A673 (cell line): ENCODE measurements at regions of chr4 and their contacts with region 1.

Region 1: GRCh38 chr4:142353149-142353738 is 492.9 kb downstream of the INPP4B start:
- DNase-seq: peak; percentile 70
- H3K4me3 ChIP-seq: no peak overlapping the region
- H3K27ac ChIP-seq: no peak overlapping the region
- H3K4me1 ChIP-seq: peaks cover 27% of the 10 kb centered on the region
- H3K27me3 ChIP-seq: no peaks in the 10 kb centered on the region
- CTCF ChIP-seq: peak; percentile 91

Region 2: DNA sequence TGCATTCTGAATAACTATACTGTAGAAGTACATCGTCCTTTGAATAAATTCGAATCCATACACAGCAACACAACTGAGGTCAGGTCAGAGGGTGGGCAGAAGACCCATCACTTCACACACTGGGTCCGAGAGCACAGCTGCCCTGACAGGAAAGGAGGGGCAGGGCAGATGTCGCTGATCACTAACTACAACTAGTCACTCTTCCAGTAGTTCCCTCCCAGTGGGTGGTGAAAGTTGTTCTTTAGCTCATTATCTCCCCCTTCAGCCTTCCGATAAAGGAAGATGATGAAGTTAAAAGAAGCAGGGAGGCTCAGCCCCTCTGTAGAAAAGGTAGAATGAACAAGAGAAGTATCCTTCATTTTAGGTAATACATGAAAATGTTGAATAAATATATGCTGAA is 214.0 kb after region 1 on chr4:
- CTCF ChIA-PET with region 1: no interaction called
- POLR2A ChIA-PET with region 1: no interaction called
- intact Hi-C with region 1: loop called (anchors 5 kb)
- DNase-seq: peak; percentile 68
- H3K4me3 ChIP-seq: no peak overlapping the region
- H3K27ac ChIP-seq: no peak overlapping the region
- H3K4me1 ChIP-seq: peaks cover 12% of the 10 kb centered on the region
- H3K27me3 ChIP-seq: no peaks in the 10 kb centered on the region
- CTCF ChIP-seq: peak; percentile 45; the same call in 1 of the 2 replicates

Region 3: GRCh38 chr4:142719854-142720541 is 366.8 kb after region 1 on chr4:
- CTCF ChIA-PET with region 1: no interaction called
- POLR2A ChIA-PET with region 1: no interaction called
- intact Hi-C with region 1: loop called (anchors 2 kb)
- DNase-seq: peak; percentile 48
- H3K4me3 ChIP-seq: no peak overlapping the region
- H3K27ac ChIP-seq: no peak overlapping the region
- H3K4me1 ChIP-seq: no peaks in the 10 kb centered on the region
- H3K27me3 ChIP-seq: no peaks in the 10 kb centered on the region
- CTCF ChIP-seq: peak; percentile 61

Region 4: GRCh38 chr4:142840516-142841123 is 487.4 kb after region 1 on chr4:
- CTCF ChIA-PET with region 1: no interaction called
- POLR2A ChIA-PET with region 1: no interaction called
- intact Hi-C with region 1: loop called (anchors 5 kb)
- DNase-seq: peak; percentile 35
- H3K4me3 ChIP-seq: no peak overlapping the region
- H3K27ac ChIP-seq: no peak overlapping the region
- H3K4me1 ChIP-seq: no peaks in the 10 kb centered on the region
- H3K27me3 ChIP-seq: peaks cover 28% of the 10 kb centered on the region
- CTCF ChIP-seq: peak; percentile 73